Naive thymus-derived CD8-positive, alpha-beta T cell (primary cell): ENCODE measurements at regions of chr6 and their contacts with region 1.

Region 1: DNA sequence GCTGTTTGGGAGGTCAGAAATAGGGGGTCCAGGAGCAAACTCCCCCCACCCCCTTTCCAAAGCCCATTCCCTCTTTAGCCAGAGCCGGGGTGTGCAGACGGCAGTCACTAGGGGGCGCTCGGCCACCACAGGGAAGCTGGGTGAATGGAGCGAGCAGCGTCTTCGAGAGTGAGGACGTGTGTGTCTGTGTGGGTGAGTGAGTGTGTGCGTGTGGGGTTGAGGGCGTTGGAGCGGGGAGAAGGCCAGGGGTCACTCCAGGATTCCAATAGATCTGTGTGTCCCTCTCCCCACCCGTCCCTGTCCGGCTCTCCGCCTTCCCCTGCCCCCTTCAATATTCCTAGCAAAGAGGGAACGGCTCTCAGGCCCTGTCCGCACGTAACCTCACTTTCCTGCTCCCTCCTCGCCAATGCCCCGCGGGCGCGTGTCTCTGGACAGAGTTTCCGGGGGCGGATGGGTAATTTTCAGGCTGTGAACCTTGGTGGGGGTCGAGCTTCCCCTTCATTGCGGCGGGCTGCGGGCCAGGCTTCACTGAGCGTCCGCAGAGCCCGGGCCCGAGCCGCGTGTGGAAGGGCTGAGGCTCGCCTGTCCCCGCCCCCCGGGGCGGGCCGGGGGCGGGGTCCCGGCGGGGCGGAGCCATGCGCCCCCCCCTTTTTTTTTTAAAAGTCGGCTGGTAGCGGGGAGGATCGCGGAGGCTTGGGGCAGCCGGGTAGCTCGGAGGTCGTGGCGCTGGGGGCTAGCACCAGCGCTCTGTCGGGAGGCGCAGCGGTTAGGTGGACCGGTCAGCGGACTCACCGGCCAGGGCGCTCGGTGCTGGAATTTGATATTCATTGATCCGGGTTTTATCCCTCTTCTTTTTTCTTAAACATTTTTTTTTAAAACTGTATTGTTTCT is at the start of gene VEGFA:
- DNase-seq: peak; percentile 76 to 93 (median 88)
- ATAC-seq: peak; percentile 77 to 85
- H3K4me3 Mint-ChIP-seq: peak within 1 kb of the TSS; percentile 81 to 97 (median 90)
- H3K27ac Mint-ChIP-seq: peak within 1 kb of the TSS; percentile 49 to 89 (median 78)
- H3K4me1 Mint-ChIP-seq: peaks cover 11 to 26% (median 19%) of the 10 kb centered on the region in 4 donors
- H3K27me3 Mint-ChIP-seq: peaks cover 9 to 32% (median 16%) of the 10 kb centered on the region in 5 donors
- polyA plus RNA-seq, gene VEGFA: not detected

Region 2: DNA sequence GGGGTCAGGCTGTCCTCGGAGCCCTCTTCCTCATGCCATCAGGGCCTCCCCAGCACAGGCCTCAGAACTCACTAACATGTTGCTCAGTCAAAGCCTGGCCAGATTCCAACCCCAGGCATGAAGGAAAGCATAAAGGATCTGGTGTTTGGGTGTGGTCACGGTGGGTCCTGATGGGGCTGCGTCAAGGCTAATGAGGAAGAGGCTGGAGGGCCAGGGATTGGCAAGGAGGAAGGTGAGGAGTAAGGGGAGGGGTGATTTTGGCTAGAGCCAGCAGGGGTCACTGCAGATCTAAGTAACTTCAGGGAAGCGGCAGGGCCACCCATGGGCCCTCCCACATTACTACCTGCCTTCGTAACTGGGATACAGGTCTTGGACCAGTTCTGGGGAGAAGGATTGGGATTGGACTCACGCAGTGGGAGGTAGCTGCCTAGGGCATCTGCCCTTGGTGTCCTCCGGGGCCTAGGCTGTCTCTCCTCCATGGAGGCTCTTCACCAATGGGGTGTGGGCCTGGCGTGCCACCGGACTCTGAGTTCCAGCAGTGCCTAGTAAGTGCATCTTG is 46.0 kb before region 1 on chr6:
- POLR2A ChIA-PET with region 1: interaction called, 13 read pairs
- DNase-seq: peak; percentile 39 to 84 (median 65)
- ATAC-seq: peak; percentile 63 to 72
- H3K4me3 Mint-ChIP-seq: peak overlapping the region in 3 of 10 donors; percentile 76 to 79 (median 78)
- H3K27ac Mint-ChIP-seq: peak overlapping the region in 8 of 10 donors; percentile 8 to 94 (median 85)
- H3K4me1 Mint-ChIP-seq: peaks cover 14 to 33% (median 30%) of the 10 kb centered on the region in 4 donors
- H3K27me3 Mint-ChIP-seq: no peaks in the 10 kb centered on the region

Region 3: GRCh38 chr6:44074439-44075136 is 304.8 kb after region 1 on chr6:
- POLR2A ChIA-PET with region 1: interaction called, 21 read pairs
- DNase-seq: peak; percentile 45 to 81 (median 66)
- ATAC-seq: peak; percentile 59 to 67
- H3K4me3 Mint-ChIP-seq: peak overlapping the region; percentile 72 to 91 (median 86)
- H3K27ac Mint-ChIP-seq: peak overlapping the region in 2 of 10 donors; percentile 30 to 58
- H3K4me1 Mint-ChIP-seq: peaks cover 9 to 28% (median 21%) of the 10 kb centered on the region in 4 donors
- H3K27me3 Mint-ChIP-seq: peaks cover 4 to 31% (median 19%) of the 10 kb centered on the region in 5 donors